ENCODE measurements at regions of chr2 and their contacts with region 1.

Region 1: DNA sequence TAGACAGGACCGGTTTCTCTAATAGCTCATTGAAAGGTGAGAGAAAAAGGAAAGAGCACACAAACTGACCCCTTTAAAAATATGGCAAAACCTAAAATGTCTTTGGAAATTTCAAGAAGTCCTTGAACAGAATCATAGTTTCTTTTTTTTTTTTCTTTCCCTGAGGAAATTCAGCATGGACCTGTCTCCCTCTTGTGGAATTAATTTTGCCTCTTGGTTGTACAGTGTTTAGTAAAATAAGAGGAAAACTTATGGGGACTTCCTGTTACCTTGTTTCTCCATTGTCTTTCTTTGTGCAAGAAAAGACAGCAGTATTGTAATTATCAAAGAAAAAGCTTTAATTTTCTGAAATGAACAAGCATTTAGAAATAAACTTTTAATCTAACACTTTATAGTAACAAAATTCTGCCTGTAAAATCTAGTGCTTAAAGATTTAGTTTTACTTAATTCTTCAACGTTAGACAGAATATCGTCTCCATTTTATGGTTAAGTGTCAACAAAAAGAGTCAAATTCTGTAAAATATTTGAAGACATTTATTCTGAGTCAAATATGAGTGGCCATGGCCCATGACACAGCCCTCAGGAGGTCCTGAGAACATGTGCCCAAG is 176.3 kb upstream of the NABP1 start:
- DNase-seq: peak; percentile 48
- H3K4me3 ChIP-seq: no peak overlapping the region
- H3K27ac ChIP-seq: peak overlapping the region in 1 of 2 experiments; percentile 97; a peak in 2 of 4 replicates
- H3K4me1 ChIP-seq: peaks cover 6 to 32% of the 10 kb centered on the region in 2 experiments; a peak in 2 of 4 replicates
- H3K27me3 ChIP-seq: no peaks in the 10 kb centered on the region
- CTCF ChIP-seq: peak; percentile 86
- EP300 ChIP-seq: no peak
- RAD21 ChIP-seq: peak; percentile 92

Region 2: GRCh38 chr2:191051825-191052778 is 449.6 kb before region 1 on chr2:
- CTCF ChIA-PET with region 1: interaction called, 18 read pairs
- POLR2A ChIA-PET with region 1: no interaction called
- DNase-seq: peak; percentile 42
- H3K4me3 ChIP-seq: peak overlapping the region in 1 of 2 experiments; percentile 19; a peak in 1 of 4 replicates
- H3K27ac ChIP-seq: no peak overlapping the region
- H3K4me1 ChIP-seq: no peaks in the 10 kb centered on the region
- H3K27me3 ChIP-seq: no peaks in the 10 kb centered on the region
- CTCF ChIP-seq: peak; percentile 77
- EP300 ChIP-seq: no peak
- RAD21 ChIP-seq: peak; percentile 86

Region 3: DNA sequence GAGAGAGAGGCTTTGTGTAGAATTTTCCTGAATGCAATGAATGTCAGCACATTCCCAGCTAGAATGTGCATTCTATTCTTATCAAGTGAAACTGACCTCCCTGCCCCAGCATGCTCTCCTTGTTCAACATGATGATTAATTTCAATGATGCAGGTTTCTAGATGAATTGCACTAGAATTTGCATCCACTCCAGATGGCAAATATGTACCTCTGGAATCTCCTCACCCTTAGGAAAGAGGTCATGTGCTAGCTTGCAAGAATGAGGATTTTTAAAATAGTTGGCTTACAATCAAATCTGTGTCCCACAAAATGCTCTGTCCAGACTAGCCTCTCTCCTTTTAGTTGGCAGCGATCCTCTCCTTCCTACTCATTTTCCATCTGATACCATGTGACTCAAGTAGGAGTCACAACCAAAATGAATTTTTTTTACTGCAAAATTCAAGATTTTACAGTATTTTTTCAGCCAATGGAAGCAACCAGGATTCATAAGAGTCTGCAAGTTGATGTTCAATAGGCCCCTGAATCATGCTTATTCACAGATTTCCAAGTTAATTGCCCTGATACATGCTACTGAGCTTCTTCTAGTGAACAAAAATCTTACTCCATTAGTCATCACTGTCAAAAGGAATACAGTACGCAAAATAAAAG is 329.8 kb before region 1 on chr2:
- CTCF ChIA-PET with region 1: interaction called, 16 read pairs
- POLR2A ChIA-PET with region 1: no interaction called
- DNase-seq: no peak
- H3K4me3 ChIP-seq: 0 out of 4 replicates have a peak overlapping the region, but pooled peaks of 1 of the 2 experiments have one; percentile 18
- H3K27ac ChIP-seq: peak overlapping the region; percentile 88 to 90
- H3K4me1 ChIP-seq: peaks cover 12 to 37% of the 10 kb centered on the region in 2 experiments
- H3K27me3 ChIP-seq: no peaks in the 10 kb centered on the region
- CTCF ChIP-seq: no peak
- EP300 ChIP-seq: peak in 1 of 2 experiments; percentile 93; a peak in 2 of 4 replicates
- RAD21 ChIP-seq: no peak

Region 4: DNA sequence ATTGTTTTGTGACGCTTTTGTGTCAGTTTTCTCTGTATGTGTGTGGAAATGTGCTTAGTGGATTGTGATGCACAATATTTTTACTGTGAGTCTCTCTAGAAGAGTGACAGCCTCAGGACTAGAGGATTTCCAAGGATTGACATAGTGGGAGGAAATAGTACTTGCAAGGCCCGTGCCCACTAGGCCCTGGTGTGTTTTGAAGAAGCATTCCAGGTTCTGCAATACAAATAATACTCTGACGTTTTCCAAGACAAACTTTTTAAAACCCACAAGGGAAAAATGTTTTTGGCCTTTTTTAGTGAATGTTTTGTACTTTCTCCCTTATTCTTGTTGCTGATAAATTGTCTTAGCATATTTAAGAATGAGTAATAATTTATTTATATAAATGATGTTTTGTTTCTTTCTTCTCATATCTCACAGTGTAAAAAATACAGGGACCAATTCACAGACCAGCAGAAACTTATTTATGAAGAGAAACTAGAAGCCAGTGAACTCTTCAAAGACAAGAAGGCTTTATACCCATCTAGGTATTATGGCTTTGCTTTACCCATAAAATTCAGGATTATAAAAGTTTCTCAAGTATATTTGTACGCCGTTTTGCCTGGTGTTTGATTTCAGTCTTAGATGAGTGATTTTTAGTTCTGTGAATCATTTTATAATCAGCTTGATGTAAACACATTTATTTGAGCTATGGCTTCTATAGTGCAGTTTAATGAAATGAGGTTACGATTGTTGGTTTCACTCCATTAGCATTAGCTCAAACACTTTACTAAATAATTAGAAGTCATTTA is 90.8 kb before region 1 on chr2:
- CTCF ChIA-PET with region 1: interaction called, 13 read pairs
- POLR2A ChIA-PET with region 1: no interaction called
- DNase-seq: no peak
- H3K4me3 ChIP-seq: no peak overlapping the region
- H3K27ac ChIP-seq: no peak overlapping the region
- H3K4me1 ChIP-seq: no peaks in the 10 kb centered on the region
- H3K27me3 ChIP-seq: no peaks in the 10 kb centered on the region
- CTCF ChIP-seq: no peak
- EP300 ChIP-seq: no peak
- RAD21 ChIP-seq: no peak

Region 5: GRCh38 chr2:191453761-191454160 is 47.9 kb before region 1 on chr2:
- CTCF ChIA-PET with region 1: no interaction called
- POLR2A ChIA-PET with region 1: no interaction called
- DNase-seq: no peak
- H3K4me3 ChIP-seq: no peak overlapping the region; a peak in 1 of 4 replicates
- H3K27ac ChIP-seq: no peak overlapping the region
- H3K4me1 ChIP-seq: no peaks in the 10 kb centered on the region
- H3K27me3 ChIP-seq: no peaks in the 10 kb centered on the region
- CTCF ChIP-seq: no peak
- EP300 ChIP-seq: no peak
- RAD21 ChIP-seq: no peak

Region 6: GRCh38 chr2:191478799-191479679 is 22.6 kb before region 1 on chr2:
- CTCF ChIA-PET with region 1: interaction called, 19 read pairs
- POLR2A ChIA-PET with region 1: interaction called, 17 read pairs
- DNase-seq: peak; percentile 71
- H3K4me3 ChIP-seq: no peak overlapping the region; a peak in 1 of 4 replicates
- H3K27ac ChIP-seq: peak overlapping the region; percentile 27 to 99; a peak in 2 of 4 replicates
- H3K4me1 ChIP-seq: peaks cover 0 to 21% of the 10 kb centered on the region in 2 experiments; a peak in 2 of 4 replicates
- H3K27me3 ChIP-seq: no peaks in the 10 kb centered on the region
- CTCF ChIP-seq: no peak
- EP300 ChIP-seq: peak in 1 of 2 experiments; percentile 97; a peak in 2 of 4 replicates
- RAD21 ChIP-seq: peak; percentile 47

Region 7: GRCh38 chr2:191521608-191522208 is 20.0 kb after region 1 on chr2:
- CTCF ChIA-PET with region 1: interaction called, 52 read pairs
- POLR2A ChIA-PET with region 1: no interaction called
- DNase-seq: peak; percentile 46
- H3K4me3 ChIP-seq: no peak overlapping the region; a peak in 1 of 4 replicates
- H3K27ac ChIP-seq: peak overlapping the region in 1 of 2 experiments; percentile 51; a peak in 1 of 4 replicates
- H3K4me1 ChIP-seq: peaks cover 0 to 5% of the 10 kb centered on the region in 2 experiments; a peak in 2 of 4 replicates
- H3K27me3 ChIP-seq: no peaks in the 10 kb centered on the region
- CTCF ChIP-seq: peak; percentile 86
- EP300 ChIP-seq: no peak
- RAD21 ChIP-seq: peak; percentile 87

Region 8: GRCh38 chr2:191691016-191691735 is 189.5 kb after region 1 on chr2:
- CTCF ChIA-PET with region 1: no interaction called
- POLR2A ChIA-PET with region 1: no interaction called
- DNase-seq: peak; percentile 62
- H3K4me3 ChIP-seq: no peak overlapping the region; a peak in 1 of 4 replicates
- H3K27ac ChIP-seq: peak overlapping the region in 1 of 2 experiments; percentile 38; a peak in 1 of 4 replicates
- H3K4me1 ChIP-seq: peaks cover 4 to 22% of the 10 kb centered on the region in 2 experiments; a peak in 3 of 4 replicates
- H3K27me3 ChIP-seq: no peaks in the 10 kb centered on the region
- CTCF ChIP-seq: peak; percentile 82
- EP300 ChIP-seq: peak in 1 of 2 experiments; percentile 51; a peak in 1 of 4 replicates
- RAD21 ChIP-seq: peak; percentile 78

Measured in SK-N-SH (cell line).